RWPE1 (cell line): ENCODE measurements at regions of chr1 and their contacts with region 1.

Region 1: GRCh38 chr1:32702599-32703478 is at the start of gene SYNC:
- DNase-seq: peak; percentile 59
- H3K27ac ChIP-seq: peak within 1 kb of the TSS; percentile 93
- CTCF ChIP-seq: no peak

Region 2: DNA sequence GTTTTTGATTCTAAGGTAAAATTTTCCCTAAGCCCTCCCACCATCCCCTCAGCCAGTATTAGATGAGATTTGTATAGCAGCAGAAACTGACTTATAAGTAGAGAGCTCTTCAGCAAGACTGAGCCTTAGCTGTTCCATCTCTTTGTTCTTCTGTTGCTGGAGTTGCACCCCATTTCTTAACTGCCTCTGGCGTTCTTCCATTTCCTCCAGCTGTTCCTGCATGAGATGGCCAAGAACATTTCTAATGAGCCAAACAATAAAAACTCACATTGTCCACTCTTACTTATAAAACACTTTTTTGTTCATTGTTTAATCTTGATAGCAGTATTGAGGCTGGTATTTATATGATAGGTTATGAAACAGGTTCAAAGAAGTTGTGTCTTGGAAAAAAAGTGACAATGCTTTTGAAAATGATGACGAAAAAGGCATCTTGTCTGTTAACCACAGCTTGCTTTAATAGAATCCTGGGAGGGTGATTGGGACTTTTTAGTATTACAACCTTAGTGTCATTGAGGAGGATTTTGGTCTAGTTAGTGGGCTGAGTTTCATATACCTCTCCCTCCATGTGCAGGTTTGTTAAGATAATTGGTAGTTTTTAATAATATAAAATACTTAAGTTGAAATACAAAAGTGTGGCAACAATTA is 18.6 kb before region 1 on chr1:
- CTCF ChIA-PET with region 1: no interaction called
- POLR2A ChIA-PET with region 1: no interaction called
- DNase-seq: no peak
- H3K27ac ChIP-seq: no peak overlapping the region
- CTCF ChIP-seq: no peak

Region 3: GRCh38 chr1:32719681-32720275 is 16.9 kb after region 1 on chr1:
- CTCF ChIA-PET with region 1: no interaction called
- POLR2A ChIA-PET with region 1: no interaction called
- DNase-seq: no peak
- H3K27ac ChIP-seq: peak overlapping the region; percentile 5
- CTCF ChIP-seq: no peak

Region 4: GRCh38 chr1:32773018-32773763 is 70.4 kb after region 1 on chr1:
- CTCF ChIA-PET with region 1: interaction called, 10 read pairs
- POLR2A ChIA-PET with region 1: interaction called, 3 read pairs
- DNase-seq: peak; percentile 72
- H3K27ac ChIP-seq: peak overlapping the region; percentile 100
- CTCF ChIP-seq: peak; percentile 95